Activated CD4-positive, alpha-beta T cell treated with anti-CD3 and anti-CD28 coated beads for 36 hours (primary cell): ENCODE measurements at regions of chr3 and their contacts with region 1.

Region 1: DNA sequence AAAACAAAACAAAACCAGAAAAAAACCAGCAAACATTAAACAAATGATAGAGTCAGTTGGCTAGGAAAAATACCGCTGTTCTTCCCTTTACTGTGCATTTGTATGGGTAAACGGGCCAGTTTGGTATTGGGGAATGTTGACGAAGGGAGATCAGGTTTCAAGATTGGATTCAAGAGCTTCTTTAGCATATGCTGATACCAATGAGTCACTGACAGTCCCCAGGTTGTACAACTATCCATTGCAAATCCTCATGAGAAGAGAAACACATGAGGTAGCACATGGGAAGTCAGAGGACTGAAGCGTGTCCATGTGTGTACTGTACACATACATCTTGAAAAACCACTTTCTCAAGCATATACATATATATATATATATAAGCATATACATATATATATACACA is 25.6 kb downstream of the TIGIT start:
- DNase-seq: no peak
- ATAC-seq: no peak
- H3K4me3 Mint-ChIP-seq: no peak overlapping the region
- H3K27ac Mint-ChIP-seq: no peak overlapping the region
- H3K4me1 Mint-ChIP-seq: peaks cover 64% of the 10 kb centered on the region
- H3K27me3 Mint-ChIP-seq: no peaks in the 10 kb centered on the region

Region 2: DNA sequence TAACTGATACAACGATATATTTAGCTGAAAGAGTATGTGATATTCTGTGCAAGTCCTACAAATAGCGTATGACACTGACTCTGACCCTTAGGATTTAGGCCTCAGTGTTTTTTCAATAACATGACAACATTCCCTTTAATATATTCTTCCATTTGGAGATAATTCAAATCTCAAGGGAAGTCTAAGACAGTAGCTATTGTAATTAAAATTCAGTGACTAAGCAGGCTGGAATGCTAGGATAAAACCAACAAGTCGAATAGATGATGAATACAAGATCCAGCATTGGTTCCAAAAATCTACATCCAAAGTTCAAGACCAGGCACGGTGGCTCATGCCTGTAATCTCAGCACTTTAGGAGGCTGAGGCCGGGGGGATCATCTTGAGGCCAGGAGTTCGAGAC is 206.8 kb before region 1 on chr3:
- CTCF ChIA-PET with region 1: no interaction called
- POLR2A ChIA-PET with region 1: interaction called, 16 read pairs
- intact Hi-C with region 1: no loop called
- DNase-seq: no peak
- ATAC-seq: no peak
- H3K4me3 Mint-ChIP-seq: no peak overlapping the region
- H3K27ac Mint-ChIP-seq: no peak overlapping the region
- H3K4me1 Mint-ChIP-seq: no peaks in the 10 kb centered on the region
- H3K27me3 Mint-ChIP-seq: peaks cover 5% of the 10 kb centered on the region